ENCODE measurements at regions of chr2 and their contacts with region 1.

Region 1: DNA sequence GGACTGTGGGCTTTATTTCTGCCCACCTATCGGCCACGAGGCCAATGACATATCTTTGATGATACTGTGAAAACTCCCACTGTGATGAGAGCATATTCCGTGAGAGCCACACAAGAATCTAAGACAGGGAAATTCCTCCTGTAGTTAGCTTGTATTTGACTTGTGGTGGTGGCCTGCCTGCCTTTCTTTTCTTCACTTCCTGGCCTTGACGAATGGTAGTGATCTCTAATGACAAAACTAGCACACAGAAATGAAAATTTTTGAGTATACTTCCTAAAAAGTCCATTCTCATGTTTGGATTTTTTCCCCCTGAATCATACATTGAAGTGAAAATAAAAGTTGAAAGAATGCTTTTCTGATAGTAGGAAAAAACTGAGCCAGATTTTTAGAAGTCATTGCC is 94.4 kb downstream of the MGAT5 start:
- DNase-seq: no peak
- ATAC-seq: no peak
- H3K4me3 ChIP-seq: no peak overlapping the region
- H3K4me3 Mint-ChIP-seq: no peak overlapping the region
- H3K27ac ChIP-seq: peak overlapping the region in 1 of 2 donors; percentile 15
- H3K27ac Mint-ChIP-seq: peak overlapping the region; percentile 66
- H3K4me1 ChIP-seq: peaks cover 6 to 8% of the 10 kb centered on the region in 2 donors
- H3K4me1 Mint-ChIP-seq: peaks cover 35% of the 10 kb centered on the region
- H3K27me3 ChIP-seq: no peaks in the 10 kb centered on the region
- H3K27me3 Mint-ChIP-seq: no peaks in the 10 kb centered on the region
- CTCF ChIP-seq: no peak

Region 2: GRCh38 chr2:134391751-134392160 is 43.5 kb after region 1 on chr2:
- CTCF ChIA-PET with region 1: no interaction called
- POLR2A ChIA-PET with region 1: no interaction called
- intact Hi-C with region 1: loop called (anchors 5 kb)
- DNase-seq: peak; percentile 23
- ATAC-seq: peak; percentile 31
- H3K4me3 ChIP-seq: no peak overlapping the region
- H3K4me3 Mint-ChIP-seq: no peak overlapping the region
- H3K27ac ChIP-seq: peak overlapping the region; percentile 41 to 61
- H3K27ac Mint-ChIP-seq: peak overlapping the region; percentile 80
- H3K4me1 ChIP-seq: peaks cover 13 to 21% of the 10 kb centered on the region in 2 donors
- H3K4me1 Mint-ChIP-seq: peaks cover 29% of the 10 kb centered on the region
- H3K27me3 ChIP-seq: no peaks in the 10 kb centered on the region
- H3K27me3 Mint-ChIP-seq: no peaks in the 10 kb centered on the region
- CTCF ChIP-seq: no peak

Region 3: DNA sequence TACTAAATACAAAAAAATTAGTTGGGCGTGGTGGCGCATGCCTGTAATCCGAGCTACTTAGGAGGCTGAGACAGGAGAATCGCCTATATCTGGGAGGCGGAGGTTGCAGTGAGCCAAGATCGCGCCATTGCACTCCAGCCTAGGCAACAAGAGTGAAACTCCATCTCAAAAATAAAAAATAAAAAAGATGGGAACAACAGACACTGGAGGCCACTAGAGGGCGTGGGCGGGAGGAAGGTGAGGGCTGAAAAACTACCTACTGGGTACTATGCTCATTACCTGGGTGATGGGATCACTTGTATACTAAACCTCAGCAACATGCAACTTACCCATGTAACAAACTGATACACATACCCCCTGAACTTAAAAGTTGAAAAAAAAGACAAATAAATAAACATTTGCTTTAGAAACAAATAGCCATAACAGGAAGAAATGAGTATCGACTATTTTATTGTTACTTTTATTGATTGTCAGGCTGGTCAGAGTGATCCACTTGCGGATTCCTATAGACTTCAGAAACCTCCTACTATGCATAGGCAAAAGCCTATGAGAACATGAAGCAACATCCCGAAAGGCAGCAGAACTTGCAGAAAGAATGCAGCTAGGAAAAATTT is 309.5 kb after region 1 on chr2:
- CTCF ChIA-PET with region 1: no interaction called
- POLR2A ChIA-PET with region 1: no interaction called
- intact Hi-C with region 1: no loop called
- DNase-seq: peak; percentile 48
- ATAC-seq: no peak
- H3K4me3 ChIP-seq: no peak overlapping the region
- H3K4me3 Mint-ChIP-seq: no peak overlapping the region
- H3K27ac ChIP-seq: no peak overlapping the region
- H3K27ac Mint-ChIP-seq: no peak overlapping the region
- H3K4me1 ChIP-seq: peaks cover 0 to 8% of the 10 kb centered on the region in 2 donors
- H3K4me1 Mint-ChIP-seq: peaks cover 3% of the 10 kb centered on the region
- H3K27me3 ChIP-seq: no peaks in the 10 kb centered on the region
- H3K27me3 Mint-ChIP-seq: no peaks in the 10 kb centered on the region
- CTCF ChIP-seq: peak; percentile 52

Measured in B cell (primary cell).